Spleen (tissue), 13 donors: ENCODE measurements at regions of chr1 and their contacts with region 1.

Region 1: GRCh38 chr1:153984123-153984894 is 1.8 kb downstream of the RAB13 start:
- DNase-seq: no peak
- H3K4me3 ChIP-seq: peak overlapping the region in 7 of 8 donors; percentile 29 to 72 (median 48)
- H3K27ac ChIP-seq: peak overlapping the region in 7 of 8 donors; percentile 82 to 91 (median 84)
- H3K4me1 ChIP-seq: peaks cover 24 to 75% (median 54%) of the 10 kb centered on the region in 6 donors
- H3K27me3 ChIP-seq: no peaks in the 10 kb centered on the region
- CTCF ChIP-seq: no peak
- POLR2A ChIP-seq: no peak

Region 2: GRCh38 chr1:153796791-153797659 is 187.3 kb before region 1 on chr1:
- intact Hi-C with region 1: loop called (anchors 5 kb)
- DNase-seq: peak; percentile 88
- H3K4me3 ChIP-seq: no peak overlapping the region
- H3K27ac ChIP-seq: no peak overlapping the region
- H3K4me1 ChIP-seq: peaks cover under 1 to 36% (median 12%) of the 10 kb centered on the region in 6 donors
- H3K27me3 ChIP-seq: no peaks in the 10 kb centered on the region
- CTCF ChIP-seq: peak; percentile 84 to 97 (median 92)
- POLR2A ChIP-seq: no peak